ENCODE measurements at regions of chr5 and their contacts with region 1.

Region 1: GRCh38 chr5:20055721-20056120 is 67.7 kb upstream of the CDH18 start:
- DNase-seq: no peak
- H3K4me3 ChIP-seq: no peak overlapping the region
- H3K27ac ChIP-seq: no peak overlapping the region
- H3K4me1 ChIP-seq: no peaks in the 10 kb centered on the region
- H3K27me3 ChIP-seq: no peaks in the 10 kb centered on the region
- CTCF ChIP-seq: no peak

Region 2: GRCh38 chr5:19676895-19677294 is 378.8 kb before region 1 on chr5:
- CTCF ChIA-PET with region 1: no interaction called
- POLR2A ChIA-PET with region 1: no interaction called
- intact Hi-C with region 1: no loop called
- DNase-seq: no peak
- H3K4me3 ChIP-seq: no peak overlapping the region
- H3K27ac ChIP-seq: no peak overlapping the region
- H3K4me1 ChIP-seq: no peaks in the 10 kb centered on the region
- H3K27me3 ChIP-seq: no peaks in the 10 kb centered on the region
- CTCF ChIP-seq: no peak

Region 3: GRCh38 chr5:20041326-20042274 is 14.1 kb before region 1 on chr5:
- CTCF ChIA-PET with region 1: no interaction called
- POLR2A ChIA-PET with region 1: no interaction called
- intact Hi-C with region 1: no loop called
- DNase-seq: no peak
- H3K4me3 ChIP-seq: no peak overlapping the region
- H3K27ac ChIP-seq: no peak overlapping the region
- H3K4me1 ChIP-seq: no peaks in the 10 kb centered on the region
- H3K27me3 ChIP-seq: no peaks in the 10 kb centered on the region
- CTCF ChIP-seq: no peak

Region 4: GRCh38 chr5:20291766-20292165 is 236.0 kb after region 1 on chr5:
- CTCF ChIA-PET with region 1: no interaction called
- POLR2A ChIA-PET with region 1: interaction called, 28 read pairs
- intact Hi-C with region 1: no loop called
- DNase-seq: no peak
- H3K4me3 ChIP-seq: no peak overlapping the region
- H3K27ac ChIP-seq: no peak overlapping the region
- H3K4me1 ChIP-seq: 0 out of 2 replicates have a peak, but pooled peaks cover 4% of the 10 kb centered on the region
- H3K27me3 ChIP-seq: no peaks in the 10 kb centered on the region
- CTCF ChIP-seq: no peak

Region 5: DNA sequence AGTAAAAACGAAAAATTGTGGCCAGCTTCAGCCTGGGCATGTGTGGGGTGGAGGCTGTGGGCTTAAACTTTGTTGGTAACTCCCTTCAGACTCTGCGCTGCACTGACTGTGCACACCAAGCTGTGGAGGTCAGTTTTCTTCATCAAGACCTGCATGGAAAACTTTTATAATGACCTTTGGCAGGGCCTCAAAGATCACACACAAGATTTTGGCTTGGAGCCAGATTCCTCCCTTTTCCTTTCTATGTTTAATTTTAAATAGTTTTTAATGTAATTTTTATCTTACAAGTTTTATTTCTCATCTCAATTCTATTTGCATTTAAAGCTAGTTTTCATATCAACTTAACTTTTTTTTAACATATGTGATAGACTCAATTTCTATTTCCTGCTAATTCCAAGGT is 1143.4 kb after region 1 on chr5:
- CTCF ChIA-PET with region 1: no interaction called
- POLR2A ChIA-PET with region 1: no interaction called
- intact Hi-C with region 1: no loop called
- DNase-seq: no peak
- H3K4me3 ChIP-seq: no peak overlapping the region
- H3K27ac ChIP-seq: no peak overlapping the region
- H3K4me1 ChIP-seq: no peaks in the 10 kb centered on the region
- H3K27me3 ChIP-seq: no peaks in the 10 kb centered on the region
- CTCF ChIP-seq: no peak

Measured in PC-9 (cell line).